Ascending aorta (tissue), 2 donors: ENCODE measurements at regions of chr12 and their contacts with region 1.

Region 1: GRCh38 chr12:52032804-52033502 is 18.3 kb upstream of the NR4A1 start:
- DNase-seq: peak; percentile 96 to 99
- H3K4me3 ChIP-seq: peak overlapping the region; percentile 54 to 56
- H3K27ac ChIP-seq: peak overlapping the region; percentile 95 to 97
- H3K4me1 ChIP-seq: peaks cover 8 to 34% of the 10 kb centered on the region in 2 donors
- H3K27me3 ChIP-seq: no peaks in the 10 kb centered on the region
- CTCF ChIP-seq: no peak

Region 2: GRCh38 chr12:51695241-51696010 is 337.5 kb before region 1 on chr12:
- intact Hi-C with region 1: no loop called
- DNase-seq: no peak
- H3K4me3 ChIP-seq: no peak overlapping the region
- H3K27ac ChIP-seq: no peak overlapping the region
- H3K4me1 ChIP-seq: no peaks in the 10 kb centered on the region
- H3K27me3 ChIP-seq: no peaks in the 10 kb centered on the region
- CTCF ChIP-seq: no peak

Region 3: GRCh38 chr12:52050761-52051541 is 18.0 kb after region 1 on chr12 and contains the start of gene NR4A1:
- intact Hi-C with region 1: loop called (anchors 1 kb)
- DNase-seq: peak; percentile 95 to 100
- H3K4me3 ChIP-seq: peak within 1 kb of the TSS; percentile 78 to 79
- H3K27ac ChIP-seq: peak within 1 kb of the TSS; percentile 96 to 98
- H3K4me1 ChIP-seq: peaks cover 6 to 21% of the 10 kb centered on the region in 2 donors
- H3K27me3 ChIP-seq: no peaks in the 10 kb centered on the region
- CTCF ChIP-seq: peak in 1 of 3 experiments; percentile 31
- total RNA-seq, gene NR4A1: 722 TPM

Region 4: GRCh38 chr12:52069327-52070184 is 36.6 kb after region 1 on chr12 and contains the start of gene ATG101:
- intact Hi-C with region 1: loop called (anchors 2 kb)
- DNase-seq: peak; percentile 68 to 96
- H3K4me3 ChIP-seq: peak within 1 kb of the TSS; percentile 70 to 84
- H3K27ac ChIP-seq: peak within 1 kb of the TSS; percentile 85 to 89
- H3K4me1 ChIP-seq: peaks cover 10 to 19% of the 10 kb centered on the region in 2 donors
- H3K27me3 ChIP-seq: no peaks in the 10 kb centered on the region
- CTCF ChIP-seq: peak; percentile 37 to 87 (median 74)
- total RNA-seq, gene ATG101: 39.8 TPM

Region 5: DNA sequence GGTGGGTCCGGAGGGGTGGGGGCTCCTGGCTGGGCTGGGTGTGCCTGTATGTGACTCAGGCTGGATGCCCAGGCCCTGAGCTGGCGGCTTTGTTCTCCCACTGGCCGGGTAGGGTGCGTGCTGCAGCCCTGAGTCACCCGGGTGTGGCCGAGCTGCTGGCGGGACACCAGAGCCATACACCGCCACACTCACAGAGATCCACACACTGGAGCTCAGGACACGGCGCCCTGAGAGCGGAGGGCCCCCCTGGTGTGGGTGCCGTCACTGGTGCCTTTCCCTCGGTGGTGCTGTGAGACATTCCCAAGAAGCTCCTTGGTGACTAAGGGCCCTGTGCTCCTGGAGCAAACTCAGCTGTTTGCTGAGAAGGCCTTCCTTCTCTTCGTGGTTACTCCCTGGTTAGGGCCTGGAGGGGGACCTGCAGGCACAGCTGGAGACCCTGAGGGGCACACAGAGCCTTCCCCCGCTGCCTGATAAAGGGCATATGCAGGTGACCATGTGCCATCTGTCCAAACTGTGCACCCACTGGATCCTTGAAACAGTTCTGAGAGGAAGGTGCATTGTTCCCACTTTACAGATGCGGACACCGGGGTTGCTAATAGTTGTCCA is 114.5 kb after region 1 on chr12:
- intact Hi-C with region 1: loop called (anchors 5 kb)
- DNase-seq: peak; percentile 91 to 99
- H3K4me3 ChIP-seq: no peak overlapping the region
- H3K27ac ChIP-seq: peak overlapping the region; percentile 80 to 89
- H3K4me1 ChIP-seq: peaks cover 7 to 34% of the 10 kb centered on the region in 2 donors
- H3K27me3 ChIP-seq: no peaks in the 10 kb centered on the region
- CTCF ChIP-seq: no peak

Region 6: GRCh38 chr12:52164611-52165010 is 131.7 kb after region 1 on chr12:
- intact Hi-C with region 1: no loop called
- DNase-seq: no peak
- H3K4me3 ChIP-seq: no peak overlapping the region
- H3K27ac ChIP-seq: no peak overlapping the region
- H3K4me1 ChIP-seq: no peaks in the 10 kb centered on the region
- H3K27me3 ChIP-seq: no peaks in the 10 kb centered on the region
- CTCF ChIP-seq: no peak

Region 7: GRCh38 chr12:52243856-52244614 is 211.1 kb after region 1 on chr12:
- intact Hi-C with region 1: loop called (anchors 10 kb)
- DNase-seq: peak; percentile 74 to 95
- H3K4me3 ChIP-seq: peak overlapping the region in 1 of 2 donors; percentile 31
- H3K27ac ChIP-seq: peak overlapping the region; percentile 88 to 90
- H3K4me1 ChIP-seq: peaks cover 17 to 52% of the 10 kb centered on the region in 2 donors
- H3K27me3 ChIP-seq: no peaks in the 10 kb centered on the region
- CTCF ChIP-seq: no peak

Region 8: GRCh38 chr12:53047221-53048042 is 1014.5 kb after region 1 on chr12:
- intact Hi-C with region 1: loop called (anchors 2 kb)
- DNase-seq: peak in 1 of 2 donors; percentile 92
- H3K4me3 ChIP-seq: peak overlapping the region; percentile 91 to 93
- H3K27ac ChIP-seq: peak overlapping the region; percentile 99
- H3K4me1 ChIP-seq: peaks cover 13 to 46% of the 10 kb centered on the region in 2 donors
- H3K27me3 ChIP-seq: no peaks in the 10 kb centered on the region
- CTCF ChIP-seq: peak in 1 of 3 experiments; percentile 77